PC-9 (cell line): ENCODE measurements at regions of chr1 and their contacts with region 1.

Region 1: GRCh38 chr1:78839704-78840277 is 166.7 kb downstream of the ADGRL4 start:
- DNase-seq: peak in 1 of 2 experiments; percentile 6
- H3K4me3 ChIP-seq: no peak overlapping the region
- H3K27ac ChIP-seq: no peak overlapping the region
- H3K4me1 ChIP-seq: no peaks in the 10 kb centered on the region
- H3K27me3 ChIP-seq: no peaks in the 10 kb centered on the region
- CTCF ChIP-seq: peak; percentile 90

Region 2: DNA sequence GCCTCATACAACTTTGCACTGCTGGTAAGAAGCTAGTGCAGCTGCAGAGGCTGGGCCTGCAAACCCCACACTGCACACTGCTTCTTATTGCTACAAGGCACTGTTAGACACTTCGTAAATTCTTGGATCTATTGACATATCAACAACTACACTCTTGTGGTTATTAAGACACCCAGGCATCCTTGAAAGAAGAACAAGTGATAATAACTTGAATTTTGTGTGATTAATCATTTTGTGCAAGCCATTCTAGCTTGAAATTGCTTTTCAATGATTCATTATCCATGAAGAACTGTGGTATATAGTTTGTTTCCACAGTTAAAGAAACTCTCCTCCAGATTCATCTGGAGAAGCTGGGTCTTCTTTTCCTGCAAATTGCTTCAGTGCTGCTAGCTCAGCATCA is 253.2 kb before region 1 on chr1:
- CTCF ChIA-PET with region 1: no interaction called
- POLR2A ChIA-PET with region 1: no interaction called
- intact Hi-C with region 1: no loop called
- DNase-seq: no peak
- H3K4me3 ChIP-seq: no peak overlapping the region
- H3K27ac ChIP-seq: no peak overlapping the region
- H3K4me1 ChIP-seq: no peaks in the 10 kb centered on the region
- H3K27me3 ChIP-seq: no peaks in the 10 kb centered on the region
- CTCF ChIP-seq: no peak

Region 3: GRCh38 chr1:79197421-79197820 is 357.6 kb after region 1 on chr1:
- CTCF ChIA-PET with region 1: no interaction called
- POLR2A ChIA-PET with region 1: no interaction called
- intact Hi-C with region 1: loop called (anchors 5 kb)
- DNase-seq: no peak
- H3K4me3 ChIP-seq: no peak overlapping the region
- H3K27ac ChIP-seq: no peak overlapping the region
- H3K4me1 ChIP-seq: peaks cover 13% of the 10 kb centered on the region; the same call in 1 of the 2 replicates
- H3K27me3 ChIP-seq: no peaks in the 10 kb centered on the region
- CTCF ChIP-seq: no peak; the same call in 1 of the 2 replicates